Pancreas (tissue), 10 donors: ENCODE measurements at regions of chr5 and their contacts with region 1.

Region 1: GRCh38 chr5:172697123-172698121 is 56.4 kb downstream of the NEURL1B start:
- DNase-seq: peak; percentile 84 to 95 (median 90)
- ATAC-seq: peak; percentile 89 to 97 (median 96)
- H3K4me3 ChIP-seq: peak overlapping the region; percentile 38 to 65 (median 50)
- H3K27ac ChIP-seq: peak overlapping the region in 2 of 4 donors; percentile 24 to 55
- H3K4me1 ChIP-seq: peaks cover 0 to 13% (median 5%) of the 10 kb centered on the region in 3 donors
- H3K27me3 ChIP-seq: no peaks in the 10 kb centered on the region
- CTCF ChIP-seq: peak; percentile 81 to 89 (median 85)

Region 2: DNA sequence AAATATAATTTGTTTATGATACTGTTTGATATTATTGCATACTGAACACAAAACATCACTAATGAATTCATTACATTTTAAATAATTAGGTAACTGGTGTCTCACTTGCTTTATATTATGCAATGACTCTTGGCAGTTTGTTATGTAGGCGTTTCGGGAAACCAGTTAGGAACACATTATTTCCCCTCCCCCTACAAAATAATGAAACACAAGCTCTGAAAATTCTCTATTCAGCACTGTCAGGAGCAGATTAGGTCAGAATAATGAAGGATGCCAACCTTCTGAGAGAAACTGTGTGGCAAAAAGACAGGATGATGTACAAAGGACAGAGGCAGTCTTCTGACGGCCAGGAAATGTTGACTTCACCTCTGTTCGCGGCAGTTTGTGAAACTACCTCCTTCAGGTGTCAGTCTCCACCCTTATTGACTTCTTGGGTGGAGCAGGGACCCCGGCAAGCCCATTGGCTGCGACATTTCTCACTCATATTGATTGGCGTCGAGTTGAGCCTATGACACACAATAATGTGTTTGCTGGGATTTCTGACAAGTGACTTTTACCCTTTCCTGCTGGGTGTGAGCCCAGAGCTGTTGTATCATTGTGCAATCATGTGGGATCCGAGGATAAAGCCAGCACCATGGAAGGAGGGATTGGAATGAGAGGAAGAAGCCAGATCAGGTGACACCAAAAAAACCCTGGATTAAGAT is 277.0 kb before region 1 on chr5:
- intact Hi-C with region 1: no loop called
- DNase-seq: peak; percentile 74 to 94 (median 86)
- ATAC-seq: peak; percentile 75 to 86 (median 82)
- H3K4me3 ChIP-seq: peak overlapping the region in 1 of 4 donors; percentile 8
- H3K27ac ChIP-seq: peak overlapping the region; percentile 58 to 88 (median 73)
- H3K4me1 ChIP-seq: peaks cover 29 to 40% (median 33%) of the 10 kb centered on the region in 3 donors
- H3K27me3 ChIP-seq: no peaks in the 10 kb centered on the region
- CTCF ChIP-seq: no peak

Region 3: GRCh38 chr5:172479044-172479783 is 218.2 kb before region 1 on chr5:
- intact Hi-C with region 1: loop called (anchors 2 to 10 kb)
- DNase-seq: peak; percentile 73 to 89 (median 78)
- ATAC-seq: peak; percentile 98 to 100 (median 99)
- H3K4me3 ChIP-seq: no peak overlapping the region
- H3K27ac ChIP-seq: no peak overlapping the region
- H3K4me1 ChIP-seq: no peaks in the 10 kb centered on the region
- H3K27me3 ChIP-seq: no peaks in the 10 kb centered on the region
- CTCF ChIP-seq: peak; percentile 68 to 86 (median 70)